ENCODE measurements at regions of chr10 and their contacts with region 1.

Region 1: GRCh38 chr10:91745074-91745832 is 53.0 kb upstream of the TNKS2 start:
- DNase-seq: peak; percentile 33
- H3K27ac ChIP-seq: no peak overlapping the region
- CTCF ChIP-seq: peak; percentile 29; the same call in 1 of the 2 replicates

Region 2: GRCh38 chr10:90470966-90471365 is 1274.3 kb before region 1 on chr10:
- CTCF ChIA-PET with region 1: no interaction called
- POLR2A ChIA-PET with region 1: no interaction called
- DNase-seq: no peak
- H3K27ac ChIP-seq: no peak overlapping the region
- CTCF ChIP-seq: no peak

Region 3: GRCh38 chr10:91493313-91493712 is 251.9 kb before region 1 on chr10:
- CTCF ChIA-PET with region 1: interaction called, 13 read pairs
- POLR2A ChIA-PET with region 1: no interaction called
- DNase-seq: peak; percentile 65
- H3K27ac ChIP-seq: no peak overlapping the region
- CTCF ChIP-seq: peak; percentile 61

Measured in RWPE1 (cell line).